Activated CD4-positive, alpha-beta memory T cell treated with anti-CD3 and anti-CD28 coated beads, Interleukin-2, amount 10 ng/mL, durations not matched to agents 7 days and 5 days (primary cell): ENCODE measurements at regions of chr22 and their contacts with region 1.

Region 1: GRCh38 chr22:24555157-24556039 is at the start of gene SNRPD3:
- DNase-seq: peak; percentile 100
- H3K4me3 Mint-ChIP-seq: peak within 1 kb of the TSS; percentile 99
- H3K27ac Mint-ChIP-seq: peak within 1 kb of the TSS; percentile 93
- H3K4me1 Mint-ChIP-seq: peaks cover 58% of the 10 kb centered on the region
- H3K27me3 Mint-ChIP-seq: no peaks in the 10 kb centered on the region
- total RNA-seq, gene SNRPD3: 87.1 to 93.5 TPM

Region 2: DNA sequence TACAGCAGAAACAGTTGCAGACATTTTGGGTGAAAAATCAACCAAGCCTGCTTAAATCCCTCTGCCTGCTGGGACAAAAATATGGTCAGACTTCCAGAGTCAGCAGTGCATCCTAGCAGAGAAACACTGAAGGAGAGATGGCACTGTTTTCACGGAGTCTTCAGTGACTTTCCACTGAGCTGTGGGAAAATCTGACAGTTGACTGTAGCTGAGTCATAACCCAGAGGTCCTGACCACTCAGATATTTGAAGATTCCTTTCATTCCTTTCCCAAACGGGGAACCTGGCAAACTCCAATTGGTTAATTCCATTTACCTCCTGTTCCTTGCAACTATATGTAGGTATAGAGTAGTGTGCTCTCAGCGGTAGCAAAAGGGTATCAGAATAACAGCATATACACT is 81.2 kb before region 1 on chr22:
- CTCF ChIA-PET with region 1: no interaction called
- POLR2A ChIA-PET with region 1: no interaction called
- DNase-seq: no peak
- H3K4me3 Mint-ChIP-seq: no peak overlapping the region
- H3K27ac Mint-ChIP-seq: no peak overlapping the region
- H3K4me1 Mint-ChIP-seq: no peaks in the 10 kb centered on the region
- H3K27me3 Mint-ChIP-seq: no peaks in the 10 kb centered on the region

Region 3: GRCh38 chr22:24525416-24526037 is 29.9 kb before region 1 on chr22:
- CTCF ChIA-PET with region 1: interaction called, 3 read pairs
- POLR2A ChIA-PET with region 1: interaction called, 10 read pairs
- DNase-seq: peak; percentile 90
- H3K4me3 Mint-ChIP-seq: no peak overlapping the region
- H3K27ac Mint-ChIP-seq: no peak overlapping the region
- H3K4me1 Mint-ChIP-seq: peaks cover 17% of the 10 kb centered on the region
- H3K27me3 Mint-ChIP-seq: peaks cover 5% of the 10 kb centered on the region

Region 4: GRCh38 chr22:24542641-24543040 is 12.8 kb before region 1 on chr22:
- CTCF ChIA-PET with region 1: no interaction called
- POLR2A ChIA-PET with region 1: interaction called, 17 read pairs
- DNase-seq: no peak
- H3K4me3 Mint-ChIP-seq: no peak overlapping the region
- H3K27ac Mint-ChIP-seq: no peak overlapping the region
- H3K4me1 Mint-ChIP-seq: no peaks in the 10 kb centered on the region
- H3K27me3 Mint-ChIP-seq: no peaks in the 10 kb centered on the region

Region 5: DNA sequence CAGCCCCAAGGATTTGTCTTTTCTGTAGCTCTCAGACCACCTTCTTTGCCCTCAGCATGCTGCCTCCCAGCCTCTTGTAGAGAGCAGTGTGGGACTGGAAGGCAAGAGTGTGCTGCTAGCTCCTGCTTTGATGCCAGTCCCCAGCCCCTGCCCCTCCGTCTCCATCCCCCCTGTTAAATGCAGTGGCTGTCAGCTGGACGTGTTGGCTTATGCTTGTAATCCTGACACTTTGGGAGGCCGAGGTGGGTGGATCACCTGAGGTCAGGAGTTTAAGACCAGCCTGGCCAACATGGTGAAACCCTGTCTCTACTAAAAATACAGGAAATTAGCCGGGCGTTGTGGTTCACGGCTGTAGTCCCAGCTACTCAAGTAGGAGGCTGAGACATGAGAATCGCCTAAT is 15.9 kb after region 1 on chr22:
- CTCF ChIA-PET with region 1: no interaction called
- POLR2A ChIA-PET with region 1: interaction called, 15 read pairs
- DNase-seq: no peak
- H3K4me3 Mint-ChIP-seq: no peak overlapping the region
- H3K27ac Mint-ChIP-seq: no peak overlapping the region
- H3K4me1 Mint-ChIP-seq: peaks cover 2% of the 10 kb centered on the region
- H3K27me3 Mint-ChIP-seq: no peaks in the 10 kb centered on the region

Region 6: GRCh38 chr22:24685531-24686190 is 130.3 kb after region 1 on chr22:
- CTCF ChIA-PET with region 1: no interaction called
- POLR2A ChIA-PET with region 1: no interaction called
- DNase-seq: no peak
- H3K4me3 Mint-ChIP-seq: no peak overlapping the region
- H3K27ac Mint-ChIP-seq: no peak overlapping the region
- H3K4me1 Mint-ChIP-seq: no peaks in the 10 kb centered on the region
- H3K27me3 Mint-ChIP-seq: peaks cover 62% of the 10 kb centered on the region